ENCODE measurements at regions of chr22 and their contacts with region 1.

Region 1: GRCh38 chr22:35437038-35437437 is 37.1 kb downstream of the MCM5 start:
- DNase-seq: no peak
- H3K4me3 ChIP-seq: no peak overlapping the region
- H3K27ac ChIP-seq: no peak overlapping the region
- H3K27me3 ChIP-seq: no peaks in the 10 kb centered on the region
- CTCF ChIP-seq: no peak

Region 2: GRCh38 chr22:35454416-35455054 is 17.5 kb after region 1 on chr22:
- CTCF ChIA-PET with region 1: no interaction called
- POLR2A ChIA-PET with region 1: no interaction called
- DNase-seq: no peak
- H3K4me3 ChIP-seq: no peak overlapping the region
- H3K27ac ChIP-seq: no peak overlapping the region
- H3K27me3 ChIP-seq: peaks cover 6% of the 10 kb centered on the region
- CTCF ChIP-seq: 0 out of 2 replicates have a peak, but pooled peaks have one; percentile 3

Region 3: DNA sequence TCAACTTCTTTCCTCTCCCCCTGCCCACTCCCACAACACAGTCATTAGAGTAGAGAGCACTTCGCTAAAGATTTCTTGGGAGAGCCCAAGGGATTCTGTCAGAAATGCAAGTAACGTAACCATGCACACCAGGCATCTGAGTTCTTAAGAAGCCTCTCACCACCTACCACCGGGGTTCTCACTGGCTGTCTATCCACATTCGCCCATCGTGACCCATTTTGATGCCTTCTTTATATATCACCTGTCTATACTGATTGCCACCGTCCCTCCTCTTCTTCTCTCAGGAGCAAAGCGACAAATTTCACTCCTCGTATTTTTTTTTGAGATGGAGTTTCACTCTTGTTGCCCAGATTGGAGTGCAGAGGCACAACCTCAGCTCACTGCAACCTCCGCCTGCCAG is 79.7 kb after region 1 on chr22:
- CTCF ChIA-PET with region 1: no interaction called
- POLR2A ChIA-PET with region 1: interaction called, 16 read pairs
- DNase-seq: no peak
- H3K4me3 ChIP-seq: no peak overlapping the region
- H3K27ac ChIP-seq: no peak overlapping the region
- H3K27me3 ChIP-seq: peaks cover 9% of the 10 kb centered on the region
- CTCF ChIP-seq: no peak

Region 4: GRCh38 chr22:35582861-35583670 is 146.0 kb after region 1 on chr22:
- CTCF ChIA-PET with region 1: interaction called, 111 read pairs
- POLR2A ChIA-PET with region 1: interaction called, 3 read pairs
- DNase-seq: no peak
- H3K4me3 ChIP-seq: no peak overlapping the region
- H3K27ac ChIP-seq: no peak overlapping the region
- H3K27me3 ChIP-seq: no peaks in the 10 kb centered on the region
- CTCF ChIP-seq: peak; percentile 94